T-cell (primary cell): ENCODE measurements at regions of chr2 and their contacts with region 1.

Region 1: GRCh38 chr2:120109186-120110061 is 96.5 kb downstream of the EPB41L5 start:
- DNase-seq: peak in 3 of 35 experiments; percentile 2 to 59 (median 18)
- ATAC-seq: peak; percentile 85 to 96 (median 95)
- H3K4me3 ChIP-seq: peak overlapping the region in 1 of 2 donors; percentile 33
- H3K4me3 Mint-ChIP-seq: peak overlapping the region; percentile 49 to 66 (median 59)
- H3K27ac ChIP-seq: no peak overlapping the region
- H3K27ac Mint-ChIP-seq: peak overlapping the region; percentile 82 to 85
- H3K4me1 ChIP-seq: peaks cover 0 to 20% of the 10 kb centered on the region in 2 experiments
- H3K4me1 Mint-ChIP-seq: peaks cover 22 to 37% (median 26%) of the 10 kb centered on the region in 3 donors
- H3K27me3 ChIP-seq: no peaks in the 10 kb centered on the region
- H3K27me3 Mint-ChIP-seq: no peaks in the 10 kb centered on the region

Region 2: DNA sequence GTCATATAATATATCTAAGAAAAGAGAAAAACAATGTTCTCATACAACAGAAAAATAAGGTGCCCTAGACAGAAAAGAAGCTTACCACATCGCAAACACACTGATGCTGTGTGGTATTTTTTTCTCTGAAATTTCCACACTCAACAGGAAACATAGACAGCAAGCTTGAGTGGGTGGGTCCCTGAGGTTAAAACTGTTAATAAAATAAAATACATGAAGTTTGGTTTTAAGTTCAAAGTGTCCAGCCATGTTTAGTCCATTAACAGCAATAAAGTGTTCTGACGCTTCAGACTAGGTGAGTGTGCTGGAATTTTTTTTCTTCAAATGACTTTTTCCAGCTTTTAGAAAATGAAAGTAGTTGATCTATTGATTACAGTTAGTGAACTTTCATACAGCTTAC is 179.9 kb before region 1 on chr2:
- CTCF ChIA-PET with region 1: no interaction called
- POLR2A ChIA-PET with region 1: no interaction called
- DNase-seq: peak in 28 of 35 experiments; percentile 4 to 68 (median 22)
- ATAC-seq: peak; percentile 89 to 95 (median 92)
- H3K4me3 ChIP-seq: peak overlapping the region in 1 of 2 donors; percentile 52
- H3K4me3 Mint-ChIP-seq: peak overlapping the region; percentile 76 to 81 (median 79)
- H3K27ac ChIP-seq: peak overlapping the region; percentile 69
- H3K27ac Mint-ChIP-seq: peak overlapping the region; percentile 96 to 100
- H3K4me1 ChIP-seq: peaks cover 19 to 48% of the 10 kb centered on the region in 2 experiments
- H3K4me1 Mint-ChIP-seq: peaks cover 63 to 73% (median 71%) of the 10 kb centered on the region in 3 donors
- H3K27me3 ChIP-seq: no peaks in the 10 kb centered on the region
- H3K27me3 Mint-ChIP-seq: no peaks in the 10 kb centered on the region

Region 3: DNA sequence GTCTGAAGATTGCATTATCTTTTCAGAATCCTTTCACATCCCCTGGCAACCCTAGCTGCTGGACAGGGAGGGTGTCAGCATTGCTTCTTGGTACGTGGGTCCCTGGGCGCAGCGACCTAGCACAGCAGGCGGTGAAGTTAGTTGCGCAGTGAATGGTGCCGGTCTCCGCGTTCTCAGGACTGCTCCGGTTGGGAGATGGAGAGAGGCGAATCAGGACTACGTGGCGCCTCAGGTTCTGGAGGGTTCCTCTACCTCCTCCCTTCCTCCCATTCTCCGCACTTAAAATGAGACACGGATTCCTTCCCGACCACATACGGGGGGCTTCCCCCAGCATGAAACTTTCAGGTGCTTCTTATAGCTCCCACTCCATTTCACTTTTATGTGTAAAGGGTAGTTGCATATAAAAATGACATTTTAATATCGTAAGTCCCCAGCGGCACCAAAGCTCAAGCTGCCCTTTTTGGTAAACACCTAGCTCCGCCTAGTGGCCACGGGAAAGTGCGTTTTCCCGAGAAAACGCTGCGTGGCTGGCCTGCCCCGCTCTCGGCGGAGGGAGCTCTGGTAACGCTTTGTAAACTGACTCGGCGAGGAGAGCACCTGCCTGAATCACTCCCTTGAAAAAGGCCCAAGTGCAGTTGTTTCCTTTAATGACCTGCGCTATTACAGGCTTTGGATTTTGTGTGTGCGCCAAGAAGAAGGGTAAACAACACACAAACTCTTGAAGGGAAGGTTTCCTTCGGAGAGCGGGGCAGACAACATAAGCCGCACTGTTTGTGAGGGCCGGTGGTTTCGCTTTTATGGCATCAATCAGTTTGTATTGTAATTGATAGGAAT is 203.7 kb after region 1 on chr2:
- CTCF ChIA-PET with region 1: interaction called, 3 to 17 read pairs
- POLR2A ChIA-PET with region 1: no interaction called
- DNase-seq: peak; percentile 30 to 79 (median 60)
- ATAC-seq: peak; percentile 74 to 83 (median 78)
- H3K4me3 ChIP-seq: peak overlapping the region; percentile 40 to 69
- H3K4me3 Mint-ChIP-seq: peak overlapping the region; percentile 71 to 76 (median 72)
- H3K27ac ChIP-seq: no peak overlapping the region
- H3K27ac Mint-ChIP-seq: peak overlapping the region in 1 of 2 donors; percentile 72
- H3K4me1 ChIP-seq: peaks cover 11 to 29% of the 10 kb centered on the region in 2 experiments
- H3K4me1 Mint-ChIP-seq: peaks cover 25 to 30% (median 29%) of the 10 kb centered on the region in 3 donors
- H3K27me3 ChIP-seq: peaks cover 0 to 30% of the 10 kb centered on the region in 2 experiments
- H3K27me3 Mint-ChIP-seq: no peaks in the 10 kb centered on the region

Region 4: GRCh38 chr2:120680136-120680761 is 570.8 kb after region 1 on chr2:
- CTCF ChIA-PET with region 1: interaction called in 1 of 2 experiments, 10 read pairs
- POLR2A ChIA-PET with region 1: no interaction called
- DNase-seq: peak; percentile 19 to 83 (median 60)
- ATAC-seq: peak; percentile 57 to 78 (median 66)
- H3K4me3 ChIP-seq: no peak overlapping the region
- H3K4me3 Mint-ChIP-seq: peak overlapping the region in 2 of 3 donors; percentile 24 to 65
- H3K27ac ChIP-seq: no peak overlapping the region
- H3K27ac Mint-ChIP-seq: no peak overlapping the region
- H3K4me1 ChIP-seq: peaks cover 0 to 10% of the 10 kb centered on the region in 2 experiments
- H3K4me1 Mint-ChIP-seq: peaks cover 1 to 6% (median 4%) of the 10 kb centered on the region in 3 donors
- H3K27me3 ChIP-seq: peaks cover 0 to 38% of the 10 kb centered on the region in 2 experiments
- H3K27me3 Mint-ChIP-seq: peaks cover 17 to 31% of the 10 kb centered on the region in 2 donors